Common myeloid progenitor, CD34-positive (primary cell): ENCODE measurements at regions of chr16 and their contacts with region 1.

Region 1: GRCh38 chr16:728131-728889 is 1.4 kb downstream of the HAGHL start:
- DNase-seq: peak in 2 of 3 donors; percentile 56 to 68
- H3K4me3 ChIP-seq: peak overlapping the region in 6 of 7 experiments; percentile 25 to 83 (median 48)
- H3K27ac ChIP-seq: no peak overlapping the region
- H3K4me1 ChIP-seq: peaks cover 0 to 24% (median 17%) of the 10 kb centered on the region in 4 experiments
- H3K27me3 ChIP-seq: peaks cover 0 to 10% (median 0%) of the 10 kb centered on the region in 5 experiments

Region 2: GRCh38 chr16:626787-627186 is 101.5 kb before region 1 on chr16:
- CTCF ChIA-PET with region 1: no interaction called
- POLR2A ChIA-PET with region 1: no interaction called
- DNase-seq: no peak
- H3K4me3 ChIP-seq: no peak overlapping the region
- H3K27ac ChIP-seq: no peak overlapping the region
- H3K4me1 ChIP-seq: peaks cover 0 to 8% (median 7%) of the 10 kb centered on the region in 4 experiments
- H3K27me3 ChIP-seq: peaks cover 0 to 7% (median 0%) of the 10 kb centered on the region in 5 experiments

Region 3: DNA sequence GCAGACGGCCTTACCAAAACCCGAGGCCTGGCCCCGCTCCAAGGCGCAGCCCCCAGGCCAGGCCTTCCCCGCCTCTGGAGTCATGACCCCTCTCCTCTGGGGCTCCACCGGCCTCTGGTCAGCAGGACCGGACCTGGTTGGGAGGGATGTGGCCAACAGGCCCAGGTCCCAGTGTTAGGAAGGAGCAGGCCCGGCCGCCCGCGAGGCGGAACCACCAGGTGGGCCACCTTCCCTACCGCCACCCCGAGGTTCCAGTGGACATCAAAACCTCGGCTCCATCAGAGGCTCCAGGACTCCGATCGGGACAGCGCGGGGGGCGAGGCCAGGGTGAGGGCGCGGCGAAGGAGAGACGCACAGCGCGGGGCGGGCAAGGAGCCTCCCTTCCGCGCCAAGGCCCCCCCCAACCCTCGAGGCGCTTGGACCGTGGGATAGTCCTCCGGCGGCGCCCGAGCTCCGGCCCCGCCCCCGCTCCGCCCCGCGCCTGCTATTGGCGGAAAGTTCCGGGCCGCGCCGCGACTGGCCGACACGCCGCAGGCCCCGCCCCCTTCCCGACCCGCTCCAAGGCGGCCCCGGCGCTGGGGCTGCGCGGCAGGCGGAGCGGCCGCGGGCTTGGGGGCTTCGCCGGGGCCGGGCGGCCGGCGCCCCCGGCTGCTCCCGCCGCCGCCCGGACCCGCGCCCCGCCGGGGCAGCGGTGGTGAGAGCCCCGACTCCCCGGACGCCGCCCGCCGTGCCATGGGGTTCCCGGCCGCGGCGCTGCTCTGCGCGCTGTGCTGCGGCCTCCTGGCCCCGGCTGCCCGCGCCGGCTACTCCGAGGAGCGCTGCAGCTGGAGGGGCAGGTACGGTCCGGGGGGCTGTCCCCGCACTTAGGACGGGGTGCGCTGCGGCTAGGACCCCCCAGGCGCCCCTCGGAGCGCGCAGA is 13.5 kb before region 1 on chr16 and contains the start of gene METRN:
- CTCF ChIA-PET with region 1: interaction called, 15 read pairs
- POLR2A ChIA-PET with region 1: interaction called, 4 read pairs
- DNase-seq: peak; percentile 81 to 87 (median 85)
- H3K4me3 ChIP-seq: peak within 1 kb of the TSS in 6 of 7 experiments; percentile 19 to 66 (median 60)
- H3K27ac ChIP-seq: no peak within 1 kb of the TSS
- H3K4me1 ChIP-seq: peaks cover 0 to 35% (median 31%) of the 10 kb centered on the region in 4 experiments
- H3K27me3 ChIP-seq: peaks cover 0 to 56% (median 9%) of the 10 kb centered on the region in 5 experiments

Region 4: DNA sequence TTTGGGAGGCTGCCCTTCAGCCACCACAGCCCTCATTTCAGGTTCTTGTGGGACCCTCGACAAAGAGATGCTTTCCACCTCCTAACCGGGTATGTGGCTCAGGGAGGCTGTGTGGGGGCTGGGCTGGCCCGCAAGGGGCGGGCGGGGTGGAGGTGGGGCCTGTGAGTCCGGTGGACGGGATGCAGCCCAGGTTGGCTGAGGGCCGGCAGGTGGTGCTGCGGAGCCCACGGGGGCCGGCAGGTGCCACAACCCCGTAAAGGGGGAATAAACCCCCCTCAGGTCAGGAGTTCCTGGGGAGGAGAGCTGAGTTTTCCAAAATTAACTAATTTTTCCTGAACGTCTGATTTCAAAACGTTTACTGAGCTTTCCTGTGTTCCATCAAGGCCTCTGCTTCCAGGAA is 17.4 kb after region 1 on chr16:
- CTCF ChIA-PET with region 1: interaction called, 14 read pairs
- POLR2A ChIA-PET with region 1: interaction called, 4 read pairs
- DNase-seq: peak; percentile 36 to 46 (median 44)
- H3K4me3 ChIP-seq: no peak overlapping the region
- H3K27ac ChIP-seq: no peak overlapping the region
- H3K4me1 ChIP-seq: peaks cover 0 to 6% (median 3%) of the 10 kb centered on the region in 4 experiments
- H3K27me3 ChIP-seq: no peaks in the 10 kb centered on the region